ENCODE measurements at regions of chr3 and their contacts with region 1.

Region 1: GRCh38 chr3:45507820-45508317 is 86.7 kb upstream of the LIMD1 start:
- DNase-seq: peak; percentile 40 to 41
- ATAC-seq: peak in 7 of 8 donors; percentile 46 to 75 (median 67)
- H3K4me3 ChIP-seq: no peak overlapping the region
- H3K27ac ChIP-seq: peak overlapping the region in 7 of 10 donors; percentile 18 to 64 (median 32)
- H3K4me1 ChIP-seq: peaks cover 0 to 22% (median 13%) of the 10 kb centered on the region in 9 donors
- H3K27me3 ChIP-seq: no peaks in the 10 kb centered on the region
- CTCF ChIP-seq: peak in 6 of 9 donors; percentile 31 to 53 (median 42)

Region 2: DNA sequence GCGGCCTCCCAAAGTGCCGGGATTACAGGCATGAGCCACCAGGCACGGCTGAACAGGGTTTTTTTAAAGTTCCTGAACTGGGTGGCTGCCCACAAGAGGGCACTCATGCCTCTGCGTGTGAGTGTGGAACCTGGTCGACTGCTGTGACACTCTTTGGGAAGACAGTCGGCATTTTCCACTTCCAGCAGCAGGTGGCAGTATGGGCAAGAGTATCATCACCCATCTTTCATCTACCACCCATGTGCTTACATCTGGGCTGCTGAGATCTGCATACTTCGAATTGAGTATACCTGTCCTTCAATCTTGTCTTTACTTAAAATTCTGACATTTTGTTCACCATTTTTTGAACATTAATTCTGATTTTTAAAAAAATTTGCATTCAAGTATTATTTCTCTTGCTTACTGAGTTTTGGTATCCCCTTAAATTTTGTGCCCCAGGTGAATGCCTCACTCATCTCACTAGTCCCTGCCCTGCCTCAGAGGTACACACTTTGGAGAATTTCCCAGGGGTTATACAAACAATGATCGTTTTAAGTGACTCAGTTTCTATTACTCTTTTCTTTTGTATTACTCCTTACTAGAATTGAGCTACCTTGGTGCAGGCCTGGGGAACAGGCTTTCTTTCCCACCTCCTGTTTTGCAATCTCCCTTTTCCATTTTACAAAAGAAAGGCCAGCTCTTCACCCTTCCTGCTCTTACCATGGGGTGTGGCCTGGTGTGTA is 470.0 kb before region 1 on chr3:
- intact Hi-C with region 1: loop called in 4 of 10 experiments (anchors 5 to 10 kb)
- DNase-seq: peak; percentile 86 to 93
- ATAC-seq: peak; percentile 63 to 86 (median 82)
- H3K4me3 ChIP-seq: peak overlapping the region in 2 of 10 donors; percentile 24 to 26
- H3K27ac ChIP-seq: peak overlapping the region in 5 of 10 donors; percentile 25 to 62 (median 32)
- H3K4me1 ChIP-seq: peaks cover 3 to 62% (median 33%) of the 10 kb centered on the region in 9 donors
- H3K27me3 ChIP-seq: no peaks in the 10 kb centered on the region
- CTCF ChIP-seq: peak; percentile 80 to 94 (median 89)

Region 3: DNA sequence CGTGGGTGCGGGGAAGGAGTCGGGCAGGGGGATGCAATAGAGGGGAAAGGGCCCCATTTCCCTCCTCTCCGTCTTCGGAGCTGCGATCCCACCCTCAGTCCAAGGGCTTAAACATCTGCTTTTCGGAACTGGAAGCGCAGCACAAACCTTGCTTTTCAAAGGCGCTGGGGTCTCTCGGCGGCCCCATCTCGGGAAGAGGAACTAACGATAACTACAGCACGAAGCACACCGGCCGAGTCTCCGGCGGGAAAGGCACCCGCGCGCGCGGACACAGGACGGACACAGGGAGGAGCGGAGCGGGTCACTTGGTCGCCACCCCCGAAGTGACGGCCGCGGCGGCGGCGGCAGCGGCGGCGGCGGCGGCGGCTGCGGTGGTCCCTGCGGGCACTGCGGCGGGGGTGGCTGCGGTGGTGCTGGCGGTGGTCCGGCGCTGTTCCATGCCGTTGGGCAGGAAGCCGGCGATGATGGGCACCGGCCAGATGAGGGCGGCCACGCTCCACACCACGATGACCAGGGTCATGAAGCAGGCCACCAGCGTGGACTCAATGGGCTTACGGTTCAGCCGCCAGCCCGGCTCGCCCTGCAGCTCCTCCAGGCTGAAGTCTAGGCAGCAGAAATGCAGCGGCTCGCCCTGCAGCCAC is 282.9 kb before region 1 on chr3:
- intact Hi-C with region 1: loop called in 2 of 10 experiments (anchors 10 kb)
- DNase-seq: peak; percentile 63 to 75
- ATAC-seq: peak; percentile 73 to 87 (median 81)
- H3K4me3 ChIP-seq: peak overlapping the region in 9 of 10 donors; percentile 34 to 55 (median 48)
- H3K27ac ChIP-seq: peak overlapping the region in 1 of 10 donors; percentile 1
- H3K4me1 ChIP-seq: peaks cover 0 to 14% (median 8%) of the 10 kb centered on the region in 9 donors
- H3K27me3 ChIP-seq: peaks cover 0 to 84% (median 65%) of the 10 kb centered on the region in 7 donors
- CTCF ChIP-seq: peak; percentile 26 to 58 (median 54)

Region 4: GRCh38 chr3:45665101-45665572 is 157.3 kb after region 1 on chr3:
- intact Hi-C with region 1: loop called in 3 of 10 experiments (anchors 1 to 2 kb)
- DNase-seq: peak in 1 of 2 donors; percentile 76
- ATAC-seq: peak in 7 of 8 donors; percentile 12 to 58 (median 33)
- H3K4me3 ChIP-seq: peak overlapping the region in 8 of 10 donors; percentile 16 to 49 (median 40)
- H3K27ac ChIP-seq: peak overlapping the region in 7 of 10 donors; percentile 3 to 74 (median 25)
- H3K4me1 ChIP-seq: peaks cover 10 to 61% (median 43%) of the 10 kb centered on the region in 9 donors
- H3K27me3 ChIP-seq: no peaks in the 10 kb centered on the region
- CTCF ChIP-seq: peak; percentile 45 to 82 (median 63)

Measured in heart right ventricle (tissue), 16 donors.